ENCODE measurements at regions of chr6 and their contacts with region 1.

Region 1: DNA sequence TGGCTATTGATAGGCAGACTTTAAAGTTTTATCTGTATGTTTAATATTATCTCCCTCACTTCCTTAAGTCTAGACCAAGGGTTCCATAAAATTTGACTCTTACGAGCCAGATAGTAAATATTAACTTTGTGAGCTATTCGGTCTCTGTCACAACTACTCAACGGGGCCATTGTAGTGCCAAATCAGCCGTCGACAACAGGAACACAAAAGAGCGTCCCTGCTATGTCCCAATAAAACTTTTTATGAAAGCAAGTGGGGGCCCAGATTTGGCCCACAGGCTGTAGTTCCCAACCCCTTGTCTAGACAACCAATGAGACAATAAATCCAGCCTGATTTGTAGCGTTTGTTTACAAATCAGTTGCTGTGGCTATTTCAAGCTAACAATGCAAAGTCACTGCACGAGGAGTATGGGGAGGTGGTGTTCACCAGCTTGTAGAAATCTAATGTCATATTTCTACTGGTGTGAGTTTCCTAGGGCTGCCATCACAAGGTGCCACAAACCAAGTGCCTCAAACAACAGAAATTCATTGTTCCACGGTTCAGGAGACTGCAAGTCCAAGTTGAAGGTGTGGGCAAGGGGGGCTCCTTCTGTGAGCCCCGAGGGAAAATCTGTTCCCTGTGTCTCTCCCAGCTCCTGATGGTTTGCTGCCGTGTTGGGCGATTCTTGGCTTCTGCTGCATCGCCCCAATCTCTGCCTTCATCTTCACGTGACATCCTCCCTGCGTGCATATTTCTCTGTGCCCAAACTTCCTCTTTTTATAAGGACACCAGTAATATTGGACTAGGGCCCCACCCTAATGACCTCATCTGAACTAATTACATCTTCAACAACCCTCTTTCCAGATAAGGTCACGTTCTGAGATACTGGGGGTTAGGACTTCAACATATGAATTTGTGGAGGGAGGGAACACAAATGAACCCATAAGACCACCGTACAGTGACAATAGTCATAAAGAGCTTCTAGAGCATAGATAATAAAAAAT is 356.0 kb upstream of the JARID2 start:
- DNase-seq: no peak
- H3K4me3 ChIP-seq: no peak overlapping the region
- H3K27ac ChIP-seq: no peak overlapping the region
- H3K4me1 ChIP-seq: no peaks in the 10 kb centered on the region
- H3K27me3 ChIP-seq: no peaks in the 10 kb centered on the region
- CTCF ChIP-seq: no peak

Region 2: GRCh38 chr6:14906621-14907020 is 16.7 kb after region 1 on chr6:
- CTCF ChIA-PET with region 1: interaction called, 12 read pairs
- POLR2A ChIA-PET with region 1: no interaction called
- intact Hi-C with region 1: no loop called
- DNase-seq: no peak
- H3K4me3 ChIP-seq: no peak overlapping the region
- H3K27ac ChIP-seq: no peak overlapping the region
- H3K4me1 ChIP-seq: no peaks in the 10 kb centered on the region
- H3K27me3 ChIP-seq: no peaks in the 10 kb centered on the region
- CTCF ChIP-seq: no peak

Region 3: DNA sequence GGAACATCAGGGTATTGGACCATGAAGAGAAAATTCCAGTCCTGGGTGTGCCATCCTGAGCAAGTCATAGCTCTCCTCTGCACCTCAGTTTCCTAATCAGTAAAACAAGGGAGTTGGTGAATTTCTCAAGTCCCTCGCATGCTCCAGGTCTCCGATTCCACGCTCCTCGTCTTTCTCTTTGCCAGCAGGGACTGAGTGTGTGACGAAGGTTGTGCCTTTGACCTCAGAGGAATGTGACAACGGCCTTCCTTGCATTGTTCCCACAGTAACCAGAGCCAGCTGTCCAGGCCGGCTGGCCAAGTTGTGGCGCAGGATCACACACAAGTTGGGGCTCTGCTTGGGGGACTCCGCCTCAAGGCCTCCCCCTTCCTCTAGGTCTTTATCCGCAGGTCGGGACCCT is 1654.1 kb after region 1 on chr6:
- CTCF ChIA-PET with region 1: no interaction called
- POLR2A ChIA-PET with region 1: no interaction called
- intact Hi-C with region 1: no loop called
- DNase-seq: no peak
- H3K4me3 ChIP-seq: no peak overlapping the region
- H3K27ac ChIP-seq: no peak overlapping the region
- H3K4me1 ChIP-seq: peaks cover 6% of the 10 kb centered on the region; the same call in 1 of the 2 replicates
- H3K27me3 ChIP-seq: no peaks in the 10 kb centered on the region
- CTCF ChIP-seq: no peak